Adrenal gland (tissue), 19 donors: ENCODE measurements at regions of chr3 and their contacts with region 1.

Region 1: DNA sequence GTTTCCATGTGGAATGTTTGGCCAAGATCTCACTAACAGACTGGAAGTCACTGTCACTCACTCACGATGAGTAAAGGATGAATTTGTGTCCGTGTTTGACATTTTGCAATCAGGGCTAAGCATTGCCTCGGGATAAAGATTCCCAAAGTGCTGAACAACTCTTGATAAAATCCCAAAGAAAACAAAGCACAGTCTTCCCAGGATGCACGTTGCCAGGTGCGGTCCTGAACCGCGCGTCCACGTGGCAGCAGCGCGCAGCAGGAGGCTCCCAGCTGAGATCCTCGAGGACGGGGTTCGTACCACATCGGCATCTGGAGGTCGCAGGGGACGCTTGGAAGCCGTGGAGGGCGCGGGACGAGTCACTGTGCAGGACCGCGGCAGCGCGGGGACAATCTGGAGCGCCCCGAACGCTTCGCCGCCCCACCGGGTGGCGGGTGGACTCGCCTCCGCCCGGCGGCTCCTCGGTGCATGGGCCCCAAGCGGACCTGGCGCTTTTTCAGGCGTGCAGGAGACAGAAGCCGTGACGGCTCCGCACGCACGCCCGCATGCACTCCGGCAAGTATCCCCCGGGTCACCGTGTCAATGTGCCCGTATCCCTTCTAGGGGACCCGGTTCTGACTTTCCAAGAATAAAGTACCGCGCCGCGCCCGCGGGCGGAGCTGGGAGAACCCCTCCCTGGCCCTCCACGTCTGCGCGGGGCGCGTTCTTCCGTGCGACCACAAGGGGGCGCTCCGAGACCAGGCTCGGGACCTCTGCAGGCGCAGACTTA is 17.7 kb downstream of the CPN2 start:
- DNase-seq: peak; percentile 85 to 93 (median 91)
- H3K4me3 ChIP-seq: peak overlapping the region in 2 of 4 donors; percentile 24 to 52
- H3K27ac ChIP-seq: no peak overlapping the region
- H3K4me1 ChIP-seq: peaks cover 0 to 7% of the 10 kb centered on the region in 2 donors
- H3K27me3 ChIP-seq: peaks cover 6% of the 10 kb centered on the region
- CTCF ChIP-seq: peak; percentile 95 to 100 (median 98)
- POLR2A ChIP-seq: no peak

Region 2: GRCh38 chr3:194382196-194382891 is 48.9 kb after region 1 on chr3:
- intact Hi-C with region 1: no loop called
- DNase-seq: no peak
- H3K4me3 ChIP-seq: no peak overlapping the region
- H3K27ac ChIP-seq: no peak overlapping the region
- H3K4me1 ChIP-seq: no peaks in the 10 kb centered on the region
- H3K27me3 ChIP-seq: peaks cover 5% of the 10 kb centered on the region
- CTCF ChIP-seq: no peak
- POLR2A ChIP-seq: no peak

Region 3: GRCh38 chr3:194395778-194396547 is 62.6 kb after region 1 on chr3:
- intact Hi-C with region 1: loop called in 1 of 2 experiments (anchors 5 kb)
- DNase-seq: no peak
- H3K4me3 ChIP-seq: no peak overlapping the region
- H3K27ac ChIP-seq: no peak overlapping the region
- H3K4me1 ChIP-seq: peaks cover 0 to 10% of the 10 kb centered on the region in 2 donors
- H3K27me3 ChIP-seq: peaks cover 19% of the 10 kb centered on the region
- CTCF ChIP-seq: no peak
- POLR2A ChIP-seq: no peak

Region 4: GRCh38 chr3:194404365-194405140 is 71.2 kb after region 1 on chr3:
- intact Hi-C with region 1: loop called (anchors 2 to 5 kb)
- DNase-seq: peak in 4 of 7 donors; percentile 25 to 55 (median 44)
- H3K4me3 ChIP-seq: no peak overlapping the region
- H3K27ac ChIP-seq: no peak overlapping the region
- H3K4me1 ChIP-seq: no peaks in the 10 kb centered on the region
- H3K27me3 ChIP-seq: no peaks in the 10 kb centered on the region
- CTCF ChIP-seq: peak; percentile 54 to 72 (median 60)
- POLR2A ChIP-seq: no peak

Region 5: DNA sequence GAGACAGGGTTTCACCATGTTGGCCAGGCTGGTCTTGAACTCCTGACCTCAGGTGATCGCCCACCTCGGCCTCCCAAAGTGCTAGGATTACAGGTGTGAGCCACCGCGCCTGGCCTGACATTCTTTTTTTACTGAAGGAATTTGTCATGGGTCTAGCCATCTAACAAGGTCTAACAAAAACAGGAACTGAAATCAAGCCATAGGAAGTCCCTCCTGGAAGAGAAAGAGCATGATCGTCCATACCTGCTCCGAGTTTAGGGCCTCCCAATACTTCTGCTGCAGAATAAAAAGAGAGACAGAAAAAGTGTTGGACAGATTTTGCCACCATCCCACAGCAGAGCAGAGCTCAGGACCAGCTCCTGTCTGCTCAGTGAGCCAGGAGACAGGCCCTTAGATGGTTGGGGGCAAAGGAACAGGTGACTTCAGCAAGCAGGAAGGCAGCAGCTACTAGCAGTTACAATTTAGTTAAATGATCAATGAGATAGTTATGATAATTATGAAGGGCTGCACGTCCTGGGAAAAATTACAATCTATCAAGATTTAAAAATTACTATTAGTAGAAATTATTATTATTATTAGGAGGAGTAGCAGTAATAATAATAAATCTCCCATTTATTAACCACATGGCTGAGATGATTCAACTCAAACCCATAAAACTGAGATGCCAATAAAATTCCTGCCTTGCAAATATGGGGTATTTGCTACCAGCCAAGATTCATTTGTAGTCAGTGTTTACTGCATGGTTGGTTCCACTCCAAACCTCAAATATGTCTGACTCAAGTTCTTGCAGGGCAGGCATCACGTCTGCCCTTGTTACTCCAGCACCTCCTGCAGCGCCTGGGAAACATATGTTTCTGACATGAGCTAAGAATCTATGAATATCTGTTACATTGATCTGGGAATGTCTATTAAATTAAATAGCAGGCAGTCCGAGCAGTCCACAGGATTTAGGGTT is 259.7 kb after region 1 on chr3:
- intact Hi-C with region 1: loop called in 1 of 2 experiments (anchors 10 kb)
- DNase-seq: peak in 1 of 7 donors; percentile 30
- H3K4me3 ChIP-seq: no peak overlapping the region
- H3K27ac ChIP-seq: no peak overlapping the region
- H3K4me1 ChIP-seq: no peaks in the 10 kb centered on the region
- H3K27me3 ChIP-seq: no peaks in the 10 kb centered on the region
- CTCF ChIP-seq: no peak
- POLR2A ChIP-seq: no peak

Region 6: DNA sequence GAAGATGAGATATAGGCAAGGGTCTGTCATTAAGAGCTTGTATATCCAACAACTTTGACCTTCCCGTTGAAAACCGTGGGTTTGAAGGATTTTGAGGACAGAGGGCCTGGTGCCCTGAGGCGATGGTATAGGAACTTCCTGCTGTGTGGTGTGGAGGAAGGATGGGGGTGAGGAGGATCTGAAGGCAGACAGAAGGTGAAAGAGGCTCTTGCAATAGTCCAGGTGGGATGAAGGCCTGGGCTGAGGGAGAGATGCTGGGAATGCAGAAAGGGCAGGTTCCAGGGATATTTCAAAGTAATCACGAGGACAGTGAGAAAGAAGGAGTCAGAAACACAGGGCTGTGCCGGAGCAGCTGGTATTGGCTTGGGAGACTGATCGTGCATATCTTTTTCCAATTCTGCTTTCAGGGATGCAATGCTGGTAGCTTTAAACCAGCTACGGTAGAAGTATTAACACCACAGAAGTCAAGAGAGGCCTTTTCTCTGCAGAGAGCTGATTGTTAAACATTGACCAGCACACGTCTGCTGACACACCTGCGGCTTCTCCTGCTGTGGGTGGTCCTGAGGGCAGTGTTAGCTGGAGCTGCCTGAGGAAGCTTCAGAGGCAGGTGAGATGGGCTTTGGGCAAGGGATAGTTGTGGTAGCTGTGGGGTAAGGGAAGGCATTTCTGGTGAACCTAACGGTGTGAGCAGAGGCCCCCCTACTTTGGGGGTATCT is 373.2 kb after region 1 on chr3:
- intact Hi-C with region 1: no loop called
- DNase-seq: no peak
- H3K4me3 ChIP-seq: no peak overlapping the region
- H3K27ac ChIP-seq: no peak overlapping the region
- H3K4me1 ChIP-seq: no peaks in the 10 kb centered on the region
- H3K27me3 ChIP-seq: no peaks in the 10 kb centered on the region
- CTCF ChIP-seq: no peak
- POLR2A ChIP-seq: no peak